PC-3 (cell line): ENCODE measurements at regions of chr13 and their contacts with region 1.

Region 1: DNA sequence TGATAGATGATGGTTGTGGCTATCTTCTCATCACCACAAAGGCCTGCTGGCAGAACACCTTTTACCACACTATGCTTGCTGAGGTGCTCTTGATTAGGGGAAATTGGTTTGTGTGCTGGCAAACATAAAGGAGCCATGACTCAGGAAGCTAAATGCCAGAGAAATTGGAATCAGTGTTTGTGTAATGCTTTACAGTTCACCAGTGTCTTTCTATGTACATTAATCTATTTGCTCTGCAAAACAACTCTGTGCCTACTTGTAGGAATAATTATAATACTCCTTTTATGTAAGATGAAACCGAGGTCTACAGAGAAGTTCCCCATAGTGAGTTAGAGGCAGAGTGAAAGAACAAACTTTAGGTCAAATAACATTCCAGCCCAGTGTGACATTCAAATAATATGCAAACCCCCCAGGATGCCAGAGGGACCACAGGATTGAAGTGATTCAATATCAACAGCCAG is 390.5 kb upstream of the HTR2A start:
- DNase-seq: peak; percentile 78
- ATAC-seq: peak; percentile 81
- H3K4me3 ChIP-seq: no peak overlapping the region
- H3K27ac ChIP-seq: peak overlapping the region; percentile 86
- H3K4me1 ChIP-seq: peaks cover 56% of the 10 kb centered on the region
- H3K27me3 ChIP-seq: no peaks in the 10 kb centered on the region
- CTCF ChIP-seq: no peak

Region 2: DNA sequence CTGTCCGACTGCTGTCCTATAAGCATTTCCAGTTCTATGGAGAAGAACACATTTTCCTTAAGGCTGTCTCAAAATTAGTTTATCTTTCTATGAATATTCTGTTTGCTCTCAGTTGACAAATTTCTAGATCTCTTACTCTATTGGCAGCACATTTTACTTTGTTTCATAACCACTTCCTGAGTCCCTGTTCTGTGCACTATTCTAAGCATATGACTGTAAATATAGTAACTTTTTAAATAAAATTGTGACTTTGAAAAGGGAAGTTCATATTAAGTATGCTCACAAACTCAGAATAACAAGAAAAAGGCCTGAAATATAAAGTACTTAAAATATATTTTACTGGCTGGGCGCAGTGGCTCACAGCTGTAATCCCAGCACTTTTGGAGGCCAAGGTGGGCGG is 334.0 kb before region 1 on chr13:
- CTCF ChIA-PET with region 1: no interaction called
- POLR2A ChIA-PET with region 1: no interaction called
- intact Hi-C with region 1: loop called (anchors 5 kb)
- DNase-seq: peak; percentile 25
- ATAC-seq: no peak
- H3K4me3 ChIP-seq: no peak overlapping the region
- H3K27ac ChIP-seq: peak overlapping the region; percentile 1; the same call in 1 of the 2 replicates
- H3K4me1 ChIP-seq: peaks cover 39% of the 10 kb centered on the region
- H3K27me3 ChIP-seq: no peaks in the 10 kb centered on the region
- CTCF ChIP-seq: no peak

Region 3: DNA sequence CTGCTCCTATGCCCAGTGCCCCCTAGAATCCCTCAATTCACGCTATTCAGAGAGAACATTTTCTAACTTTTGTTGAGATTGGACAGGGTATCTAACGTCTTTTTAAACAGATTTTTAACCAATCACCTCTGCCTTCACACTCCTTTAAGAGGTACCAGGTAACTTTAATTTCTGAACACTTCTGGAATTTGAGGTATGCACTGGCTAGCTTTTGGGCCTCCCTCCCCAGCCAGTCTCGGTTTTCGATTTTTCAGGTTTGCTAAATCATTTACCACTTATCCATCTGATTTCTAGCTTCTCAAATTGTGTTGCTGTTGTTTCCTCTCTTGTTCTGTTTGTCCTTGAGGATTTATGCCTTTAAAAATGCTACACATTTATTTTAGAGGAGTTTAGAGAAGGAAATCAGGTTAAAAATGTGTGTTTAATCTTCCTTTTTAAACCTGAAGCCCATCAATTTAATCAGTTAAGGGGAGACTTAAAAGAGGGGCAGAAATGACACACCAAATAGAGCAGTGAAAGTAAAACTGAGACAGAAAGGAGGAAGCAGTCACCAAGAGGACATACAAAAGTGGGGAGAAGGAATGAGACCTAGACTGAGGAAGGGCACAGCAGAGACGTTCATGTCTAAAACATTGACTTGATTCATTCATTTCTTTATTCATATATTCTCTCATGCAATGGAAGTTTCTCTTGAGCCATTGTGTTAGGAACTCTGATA is 250.9 kb before region 1 on chr13:
- CTCF ChIA-PET with region 1: no interaction called
- POLR2A ChIA-PET with region 1: no interaction called
- intact Hi-C with region 1: loop called (anchors 10 kb)
- DNase-seq: no peak
- ATAC-seq: no peak
- H3K4me3 ChIP-seq: no peak overlapping the region
- H3K27ac ChIP-seq: no peak overlapping the region
- H3K4me1 ChIP-seq: peaks cover 34% of the 10 kb centered on the region
- H3K27me3 ChIP-seq: no peaks in the 10 kb centered on the region
- CTCF ChIP-seq: no peak

Region 4: GRCh38 chr13:47215741-47216140 is 71.6 kb before region 1 on chr13:
- CTCF ChIA-PET with region 1: no interaction called
- POLR2A ChIA-PET with region 1: no interaction called
- intact Hi-C with region 1: loop called (anchors 10 kb)
- DNase-seq: peak; percentile 86
- ATAC-seq: peak; percentile 68
- H3K4me3 ChIP-seq: peak overlapping the region; percentile 39; the same call in 1 of the 2 replicates
- H3K27ac ChIP-seq: peak overlapping the region; percentile 84
- H3K4me1 ChIP-seq: peaks cover 54% of the 10 kb centered on the region
- H3K27me3 ChIP-seq: no peaks in the 10 kb centered on the region
- CTCF ChIP-seq: no peak